Panc1 (cell line): ENCODE measurements at regions of chr19 and their contacts with region 1.

Region 1: DNA sequence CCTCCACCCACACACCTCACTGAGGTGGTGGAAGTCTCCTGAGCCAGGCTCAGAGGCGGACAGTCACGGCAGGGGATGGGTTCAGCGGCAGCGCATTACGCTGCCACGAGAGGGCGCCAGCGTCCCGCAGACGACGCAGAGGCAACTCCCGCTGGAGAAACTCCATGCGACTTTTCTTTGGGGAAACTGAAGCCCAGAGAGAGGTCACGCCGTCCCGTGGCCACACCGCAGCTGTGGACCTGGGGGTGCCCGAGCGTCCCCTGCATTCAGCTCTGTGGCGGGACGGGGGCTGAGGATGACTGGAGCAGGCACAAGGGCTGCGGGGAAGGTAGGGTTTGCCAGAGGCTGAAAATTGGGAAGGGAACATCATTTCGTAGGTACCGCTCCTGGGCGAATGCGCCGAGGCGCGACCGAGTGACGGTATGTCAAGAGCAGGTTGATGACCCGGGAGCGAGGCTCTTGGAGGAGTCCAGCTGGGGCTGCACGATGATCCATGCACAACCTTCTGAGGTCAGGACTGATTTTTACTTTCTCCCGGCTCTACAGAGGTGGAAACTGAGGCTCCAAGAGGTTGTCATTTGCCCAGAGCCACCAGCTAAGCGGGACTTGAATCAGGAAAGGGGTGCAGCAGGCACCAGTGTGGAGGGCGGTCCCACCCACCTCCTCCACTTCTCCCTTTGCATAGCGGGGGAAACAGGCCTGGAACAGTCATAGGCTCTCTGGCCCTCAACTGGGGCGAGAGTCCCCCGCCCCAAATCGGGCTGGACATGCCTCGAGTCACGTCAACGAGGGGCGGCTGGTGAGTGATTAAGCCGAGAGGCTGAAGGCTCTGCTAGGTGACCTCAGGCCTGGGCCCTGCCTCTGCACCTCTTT is 690 bp upstream of the ARRDC2 start:
- DNase-seq: no peak
- ATAC-seq: peak; percentile 89
- H3K4me3 ChIP-seq: peak overlapping the region; percentile 39 to 51
- H3K27ac ChIP-seq: peak overlapping the region; percentile 69; the same call in 1 of the 2 replicates
- H3K4me1 ChIP-seq: peaks cover 8% of the 10 kb centered on the region
- H3K27me3 ChIP-seq: no peaks in the 10 kb centered on the region
- CTCF ChIP-seq: peak; percentile 95

Region 2: GRCh38 chr19:17001603-17002183 is 1005.6 kb before region 1 on chr19:
- CTCF ChIA-PET with region 1: no interaction called
- POLR2A ChIA-PET with region 1: no interaction called
- in situ Hi-C with region 1: no loop called
- intact Hi-C with region 1: no loop called
- DNase-seq: no peak
- ATAC-seq: no peak
- H3K4me3 ChIP-seq: no peak overlapping the region
- H3K27ac ChIP-seq: no peak overlapping the region
- H3K4me1 ChIP-seq: no peaks in the 10 kb centered on the region
- H3K27me3 ChIP-seq: no peaks in the 10 kb centered on the region
- CTCF ChIP-seq: no peak

Region 3: GRCh38 chr19:17915951-17916593 is 91.2 kb before region 1 on chr19:
- CTCF ChIA-PET with region 1: no interaction called
- POLR2A ChIA-PET with region 1: no interaction called
- in situ Hi-C with region 1: no loop called
- intact Hi-C with region 1: no loop called
- DNase-seq: no peak
- ATAC-seq: 0 out of 2 replicates have a peak, but pooled peaks have one; percentile 12
- H3K4me3 ChIP-seq: no peak overlapping the region
- H3K27ac ChIP-seq: no peak overlapping the region
- H3K4me1 ChIP-seq: no peaks in the 10 kb centered on the region
- H3K27me3 ChIP-seq: no peaks in the 10 kb centered on the region
- CTCF ChIP-seq: no peak

Region 4: DNA sequence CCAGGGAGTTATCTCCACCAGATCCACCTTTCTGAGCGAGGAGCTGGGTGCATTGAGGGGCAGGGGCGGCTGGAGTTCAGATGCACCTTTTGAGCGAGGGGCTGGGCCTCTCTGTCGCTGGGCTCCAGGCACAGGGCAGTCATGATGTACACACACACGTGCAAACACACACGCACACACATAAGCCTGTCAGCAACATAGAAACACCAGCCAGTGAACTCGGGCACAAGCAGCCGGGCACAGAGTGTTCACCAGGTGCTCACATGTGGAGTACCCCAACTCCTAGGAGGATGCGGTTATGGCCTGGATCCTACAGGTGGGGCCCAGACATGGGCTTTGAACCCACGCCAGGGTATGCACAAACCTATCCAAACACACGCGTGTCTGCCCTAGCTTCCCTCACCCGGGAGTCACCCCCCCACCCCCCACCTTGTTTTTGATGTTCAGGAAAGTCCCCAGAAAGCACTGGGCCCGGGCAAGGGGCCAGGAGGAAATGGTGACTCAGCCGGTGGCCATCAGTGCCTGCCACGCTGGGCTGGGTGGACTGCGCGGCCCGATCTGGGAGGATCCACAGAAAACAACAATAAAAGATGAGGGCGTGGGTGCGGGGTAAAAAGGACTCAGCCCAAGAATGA is 14.0 kb after region 1 on chr19:
- CTCF ChIA-PET with region 1: no interaction called
- POLR2A ChIA-PET with region 1: no interaction called
- in situ Hi-C with region 1: no loop called
- intact Hi-C with region 1: no loop called
- DNase-seq: no peak
- ATAC-seq: peak; percentile 69
- H3K4me3 ChIP-seq: no peak overlapping the region
- H3K27ac ChIP-seq: peak overlapping the region; percentile 40
- H3K4me1 ChIP-seq: peaks cover 18% of the 10 kb centered on the region; the same call in 1 of the 2 replicates
- H3K27me3 ChIP-seq: no peaks in the 10 kb centered on the region
- CTCF ChIP-seq: no peak

Region 5: GRCh38 chr19:18058208-18059030 is 51.1 kb after region 1 on chr19:
- CTCF ChIA-PET with region 1: interaction called, 4 read pairs
- POLR2A ChIA-PET with region 1: no interaction called
- in situ Hi-C with region 1: no loop called
- intact Hi-C with region 1: loop called (anchors 1 kb)
- DNase-seq: no peak
- ATAC-seq: peak; percentile 86
- H3K4me3 ChIP-seq: peak overlapping the region in 1 of 2 experiments; percentile 23; a peak in 2 of 4 replicates
- H3K27ac ChIP-seq: peak overlapping the region; percentile 80
- H3K4me1 ChIP-seq: no peaks in the 10 kb centered on the region
- H3K27me3 ChIP-seq: no peaks in the 10 kb centered on the region
- CTCF ChIP-seq: peak; percentile 87

Region 6: GRCh38 chr19:18097217-18097992 is 90.1 kb after region 1 on chr19 and contains the start of gene MAST3:
- CTCF ChIA-PET with region 1: no interaction called
- POLR2A ChIA-PET with region 1: no interaction called
- in situ Hi-C with region 1: no loop called
- intact Hi-C with region 1: no loop called
- DNase-seq: no peak
- ATAC-seq: peak; percentile 99
- H3K4me3 ChIP-seq: peak within 1 kb of the TSS; percentile 62 to 75
- H3K27ac ChIP-seq: no peak within 1 kb of the TSS
- H3K4me1 ChIP-seq: peaks cover 9% of the 10 kb centered on the region; the same call in 1 of the 2 replicates
- H3K27me3 ChIP-seq: no peaks in the 10 kb centered on the region
- CTCF ChIP-seq: no peak
- total RNA-seq, gene MAST3: 13.1 TPM